ENCODE measurements at regions of chr9 and their contacts with region 1.

Region 1: GRCh38 chr9:385818-386398 is 171.2 kb downstream of the DOCK8 start:
- DNase-seq: peak; percentile 64
- H3K4me3 Mint-ChIP-seq: no peak overlapping the region
- H3K27ac Mint-ChIP-seq: no peak overlapping the region
- H3K4me1 Mint-ChIP-seq: no peaks in the 10 kb centered on the region
- H3K27me3 Mint-ChIP-seq: no peaks in the 10 kb centered on the region

Region 2: DNA sequence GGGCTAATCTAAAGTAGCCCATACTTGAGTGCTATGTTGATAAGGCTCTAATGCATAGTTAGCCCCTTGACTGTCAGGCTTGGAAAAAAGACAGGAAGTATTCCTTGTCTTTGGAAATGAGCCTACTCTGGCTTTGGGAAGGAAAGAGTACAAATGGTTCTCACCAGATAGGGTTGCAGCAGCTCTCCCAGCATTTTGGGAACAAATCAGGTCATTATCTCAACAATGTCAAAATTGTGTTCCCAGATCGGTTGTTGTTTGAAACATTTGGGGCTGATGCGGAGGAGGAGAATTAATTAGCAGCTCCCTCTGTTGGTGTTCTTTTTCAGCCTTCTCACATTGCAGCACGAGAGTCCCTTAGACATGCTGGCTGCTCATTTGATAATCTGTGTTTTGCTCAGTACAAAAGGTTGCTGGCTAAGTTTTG is 160.9 kb after region 1 on chr9:
- CTCF ChIA-PET with region 1: no interaction called
- intact Hi-C with region 1: loop called (anchors 1 kb)
- DNase-seq: no peak
- H3K4me3 Mint-ChIP-seq: peak overlapping the region; percentile 13
- H3K27ac Mint-ChIP-seq: peak overlapping the region; percentile 17
- H3K4me1 Mint-ChIP-seq: peaks cover 28% of the 10 kb centered on the region
- H3K27me3 Mint-ChIP-seq: no peaks in the 10 kb centered on the region

Region 3: GRCh38 chr9:763692-764524 is 378.0 kb after region 1 on chr9:
- CTCF ChIA-PET with region 1: no interaction called
- intact Hi-C with region 1: loop called (anchors 5 kb)
- DNase-seq: peak; percentile 62
- H3K4me3 Mint-ChIP-seq: no peak overlapping the region
- H3K27ac Mint-ChIP-seq: no peak overlapping the region
- H3K4me1 Mint-ChIP-seq: no peaks in the 10 kb centered on the region
- H3K27me3 Mint-ChIP-seq: no peaks in the 10 kb centered on the region

Measured in activated naive CD4-positive, alpha-beta T cell treated with anti-CD3 and anti-CD28 coated beads for 36 hours (primary cell).